ENCODE measurements at regions of chr6 and their contacts with region 1.

Region 1: GRCh38 chr6:33248925-33249731 is 22.5 kb downstream of the VPS52 start:
- DNase-seq: peak; percentile 99
- H3K4me3 Mint-ChIP-seq: peak overlapping the region; percentile 88
- H3K27ac Mint-ChIP-seq: peak overlapping the region; percentile 90
- H3K4me1 Mint-ChIP-seq: peaks cover 43% of the 10 kb centered on the region
- H3K27me3 Mint-ChIP-seq: peaks cover 3% of the 10 kb centered on the region

Region 2: GRCh38 chr6:32993363-32993973 is 255.7 kb before region 1 on chr6:
- CTCF ChIA-PET with region 1: no interaction called
- POLR2A ChIA-PET with region 1: no interaction called
- intact Hi-C with region 1: no loop called
- DNase-seq: no peak
- H3K4me3 Mint-ChIP-seq: no peak overlapping the region
- H3K27ac Mint-ChIP-seq: no peak overlapping the region
- H3K4me1 Mint-ChIP-seq: peaks cover 4% of the 10 kb centered on the region
- H3K27me3 Mint-ChIP-seq: peaks cover 11% of the 10 kb centered on the region

Region 3: DNA sequence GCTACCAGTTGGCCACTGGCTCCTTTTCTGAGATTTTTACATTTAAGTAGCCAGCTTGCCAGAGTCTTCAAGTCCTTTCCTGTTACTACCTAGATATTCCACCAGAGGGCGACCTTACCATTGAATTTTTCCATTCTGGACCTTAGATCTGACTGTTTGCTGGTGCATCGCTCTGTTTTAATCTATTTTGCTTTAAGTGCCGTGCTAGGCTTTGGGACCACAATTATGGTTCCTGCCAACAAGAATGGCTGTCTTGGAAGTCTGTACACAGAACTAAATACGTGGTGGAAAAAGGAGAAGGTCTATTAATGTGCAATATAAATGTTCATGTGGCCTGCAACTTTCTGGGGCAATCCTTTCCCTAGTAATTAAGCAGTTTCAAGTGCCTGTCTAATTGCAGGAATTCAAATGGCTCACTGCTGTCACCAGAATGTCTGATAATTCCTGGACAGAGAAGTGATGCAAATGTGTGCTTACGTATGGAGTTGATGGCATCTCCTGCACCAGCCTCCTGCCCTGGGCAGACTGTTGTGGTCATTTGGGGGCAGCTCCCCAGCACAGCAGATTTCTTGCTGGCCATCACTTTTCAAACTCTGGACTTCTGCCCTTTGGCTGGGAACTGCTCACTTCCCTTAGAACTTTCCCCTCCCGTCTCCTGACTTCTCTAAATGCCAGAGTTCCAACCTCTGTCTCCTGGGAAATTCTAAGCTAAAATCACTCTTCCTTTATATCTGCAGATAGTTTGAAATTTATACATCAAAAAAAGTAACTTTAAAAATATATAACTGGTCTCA is 234.1 kb before region 1 on chr6:
- CTCF ChIA-PET with region 1: interaction called, 26 read pairs
- POLR2A ChIA-PET with region 1: no interaction called
- intact Hi-C with region 1: loop called (anchors 2 kb)
- DNase-seq: peak; percentile 34
- H3K4me3 Mint-ChIP-seq: no peak overlapping the region
- H3K27ac Mint-ChIP-seq: no peak overlapping the region
- H3K4me1 Mint-ChIP-seq: peaks cover 12% of the 10 kb centered on the region
- H3K27me3 Mint-ChIP-seq: peaks cover 15% of the 10 kb centered on the region

Region 4: DNA sequence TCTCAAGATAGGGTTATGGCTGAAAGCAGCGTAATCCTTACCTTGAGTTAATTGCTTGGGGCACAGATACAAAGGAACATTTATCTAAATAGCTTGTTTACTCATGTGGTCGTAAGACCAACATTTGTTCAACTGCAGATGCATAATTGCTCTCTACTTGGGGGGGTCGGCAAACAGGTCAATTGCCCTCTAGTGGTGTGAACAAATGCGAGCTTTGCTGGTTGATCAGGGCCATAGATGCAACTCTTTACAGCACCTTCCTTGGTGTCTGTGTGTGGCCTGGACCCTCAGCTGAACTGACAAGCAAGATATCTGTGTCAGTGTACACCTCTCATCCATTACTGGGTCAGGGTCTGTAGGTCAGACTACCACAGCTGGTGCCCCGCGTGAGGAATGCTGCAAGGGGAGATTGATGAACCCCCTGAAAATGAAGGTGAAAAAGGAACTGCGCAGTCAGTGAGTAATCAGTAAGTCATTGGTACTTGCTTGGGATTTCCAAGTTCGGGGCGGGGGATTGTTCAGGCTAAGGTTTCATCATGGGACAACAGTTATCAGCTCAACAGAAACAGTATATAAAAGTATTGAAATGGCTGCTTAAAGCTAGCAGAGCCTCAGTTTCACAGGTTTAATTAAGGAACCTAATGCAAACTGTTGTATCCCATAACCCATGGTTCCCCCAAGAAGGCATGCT is 199.7 kb before region 1 on chr6:
- CTCF ChIA-PET with region 1: no interaction called
- POLR2A ChIA-PET with region 1: no interaction called
- intact Hi-C with region 1: no loop called
- DNase-seq: no peak
- H3K4me3 Mint-ChIP-seq: no peak overlapping the region
- H3K27ac Mint-ChIP-seq: no peak overlapping the region
- H3K4me1 Mint-ChIP-seq: no peaks in the 10 kb centered on the region
- H3K27me3 Mint-ChIP-seq: peaks cover 35% of the 10 kb centered on the region

Region 5: GRCh38 chr6:33126101-33126714 is 122.9 kb before region 1 on chr6:
- CTCF ChIA-PET with region 1: interaction called, 91 read pairs
- POLR2A ChIA-PET with region 1: no interaction called
- intact Hi-C with region 1: loop called (anchors 1 kb)
- DNase-seq: peak; percentile 75
- H3K4me3 Mint-ChIP-seq: no peak overlapping the region
- H3K27ac Mint-ChIP-seq: no peak overlapping the region
- H3K4me1 Mint-ChIP-seq: no peaks in the 10 kb centered on the region
- H3K27me3 Mint-ChIP-seq: peaks cover 26% of the 10 kb centered on the region

Region 6: DNA sequence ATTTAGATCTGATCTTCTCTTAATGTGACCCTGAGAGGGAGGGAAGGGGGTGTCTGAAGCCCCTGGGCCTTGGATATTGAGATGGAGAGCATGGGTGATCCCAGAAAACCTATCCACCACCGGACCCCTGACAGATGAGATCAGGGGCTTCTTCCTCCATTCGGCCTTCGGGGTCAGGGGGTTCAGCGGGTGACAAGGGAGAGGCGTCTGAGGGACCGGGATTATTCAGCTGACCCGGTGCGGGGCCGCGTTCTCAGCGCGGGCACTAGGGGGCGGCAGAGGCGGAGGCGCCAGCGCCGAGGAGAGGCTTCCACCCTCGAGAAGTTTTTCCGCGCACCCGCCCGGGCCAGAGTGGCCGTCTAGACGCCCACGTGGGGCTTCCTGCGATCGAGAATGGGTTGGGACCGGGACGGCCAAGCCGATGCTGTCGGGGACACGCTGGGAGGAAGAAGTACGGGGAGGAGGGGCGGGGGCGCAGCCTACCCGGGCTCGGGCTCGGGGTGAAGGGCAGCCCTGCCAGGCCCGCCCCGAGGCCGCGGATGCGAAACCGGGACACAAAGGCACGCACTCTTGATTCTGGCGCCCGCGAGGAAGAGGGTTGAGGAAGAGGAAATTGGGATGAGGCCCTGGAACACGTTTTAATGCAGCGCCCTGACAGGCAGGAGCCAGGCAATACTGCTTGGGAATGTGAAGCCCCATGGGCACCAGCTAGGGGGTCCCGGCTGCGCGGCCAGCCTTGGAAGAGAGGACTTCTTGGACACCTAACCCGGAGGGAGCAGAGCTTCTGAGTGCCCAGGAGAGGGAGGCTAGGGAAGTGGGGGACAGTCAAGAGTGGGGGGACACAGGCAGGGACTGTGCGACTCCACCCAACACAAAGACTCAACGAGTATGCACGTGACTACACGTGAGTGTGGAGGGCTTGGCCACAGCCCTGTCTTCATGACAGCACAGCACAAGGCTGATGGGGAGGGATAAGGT is 87.5 kb before region 1 on chr6:
- CTCF ChIA-PET with region 1: interaction called, 101 read pairs
- POLR2A ChIA-PET with region 1: interaction called, 3 read pairs
- intact Hi-C with region 1: loop called (anchors 1 kb)
- DNase-seq: peak; percentile 88
- H3K4me3 Mint-ChIP-seq: peak overlapping the region; percentile 76
- H3K27ac Mint-ChIP-seq: no peak overlapping the region
- H3K4me1 Mint-ChIP-seq: peaks cover 13% of the 10 kb centered on the region
- H3K27me3 Mint-ChIP-seq: peaks cover 6% of the 10 kb centered on the region

Region 7: GRCh38 chr6:33288921-33289748 is 40.0 kb after region 1 on chr6 and contains the starts of genes PFDN6 and WDR46:
- CTCF ChIA-PET with region 1: no interaction called
- POLR2A ChIA-PET with region 1: interaction called, 8 read pairs
- intact Hi-C with region 1: loop called (anchors 1 kb)
- DNase-seq: peak; percentile 89
- H3K4me3 Mint-ChIP-seq: peak within 1 kb of the TSS; percentile 98
- H3K27ac Mint-ChIP-seq: peak within 1 kb of the TSS; percentile 80
- H3K4me1 Mint-ChIP-seq: peaks cover 41% of the 10 kb centered on the region
- H3K27me3 Mint-ChIP-seq: no peaks in the 10 kb centered on the region
- total RNA-seq, gene PFDN6: 78.5 to 90.9 TPM
- total RNA-seq, gene WDR46: 59.4 to 60.7 TPM

Region 8: DNA sequence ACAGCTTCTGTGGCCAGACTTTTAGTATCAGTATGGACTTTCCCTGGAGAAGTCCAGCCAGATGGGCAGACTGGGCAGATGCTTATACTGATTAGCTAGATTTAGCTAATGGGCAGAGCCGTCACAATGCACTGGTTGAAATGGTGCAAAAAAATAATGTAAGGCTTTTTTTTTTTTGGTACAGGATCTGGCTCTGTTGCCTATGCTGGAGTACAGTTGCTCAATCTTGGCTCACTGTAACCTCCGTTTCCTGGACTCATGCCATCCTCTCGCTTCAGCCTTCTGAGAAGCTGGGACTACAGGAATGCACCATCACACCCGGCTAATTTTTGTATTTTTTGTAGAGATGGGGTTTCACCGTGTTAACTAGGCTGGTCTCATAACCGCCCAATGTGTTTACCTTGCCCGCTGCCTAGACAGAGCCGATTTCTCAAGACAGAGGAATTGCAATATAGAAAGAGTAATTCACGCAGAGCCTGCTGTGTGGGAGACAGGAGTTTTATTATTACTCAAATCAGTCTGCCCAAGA is 126.1 kb after region 1 on chr6:
- CTCF ChIA-PET with region 1: no interaction called
- POLR2A ChIA-PET with region 1: no interaction called
- intact Hi-C with region 1: no loop called
- DNase-seq: no peak
- H3K4me3 Mint-ChIP-seq: no peak overlapping the region
- H3K27ac Mint-ChIP-seq: no peak overlapping the region
- H3K4me1 Mint-ChIP-seq: peaks cover 8% of the 10 kb centered on the region
- H3K27me3 Mint-ChIP-seq: no peaks in the 10 kb centered on the region

Measured in activated CD4-positive, alpha-beta memory T cell treated with anti-CD3 and anti-CD28 coated beads for 36 hours (primary cell).